CD8-positive, alpha-beta T cell (primary cell): ENCODE measurements at regions of chr11 and their contacts with region 1.

Region 1: DNA sequence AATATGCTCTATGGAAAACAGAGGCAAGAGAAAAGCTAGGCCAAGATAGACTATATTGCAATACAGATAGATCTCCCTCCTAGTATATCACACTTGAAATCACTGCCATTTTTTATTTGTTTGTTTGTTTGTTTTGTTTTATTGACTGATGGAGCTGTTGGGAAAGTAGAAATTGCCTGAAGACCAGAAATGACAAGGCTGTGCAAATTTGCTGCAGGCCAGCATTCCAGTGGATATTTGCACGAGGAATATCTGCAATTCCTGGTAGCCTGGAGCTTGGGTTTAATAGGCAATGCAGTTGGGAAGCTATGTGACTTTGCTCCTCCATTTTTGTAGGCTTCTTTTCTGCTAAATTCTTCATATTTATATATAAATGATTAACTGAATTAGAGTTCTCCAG is 991.7 kb downstream of the LRRC4C start:
- DNase-seq: no peak
- ATAC-seq: no peak
- H3K4me3 ChIP-seq: no peak overlapping the region
- H3K4me3 Mint-ChIP-seq: no peak overlapping the region
- H3K27ac ChIP-seq: no peak overlapping the region
- H3K27ac Mint-ChIP-seq: no peak overlapping the region
- H3K4me1 ChIP-seq: no peaks in the 10 kb centered on the region
- H3K4me1 Mint-ChIP-seq: no peaks in the 10 kb centered on the region
- H3K27me3 ChIP-seq: no peaks in the 10 kb centered on the region
- H3K27me3 Mint-ChIP-seq: no peaks in the 10 kb centered on the region
- CTCF ChIP-seq: no peak

Region 2: DNA sequence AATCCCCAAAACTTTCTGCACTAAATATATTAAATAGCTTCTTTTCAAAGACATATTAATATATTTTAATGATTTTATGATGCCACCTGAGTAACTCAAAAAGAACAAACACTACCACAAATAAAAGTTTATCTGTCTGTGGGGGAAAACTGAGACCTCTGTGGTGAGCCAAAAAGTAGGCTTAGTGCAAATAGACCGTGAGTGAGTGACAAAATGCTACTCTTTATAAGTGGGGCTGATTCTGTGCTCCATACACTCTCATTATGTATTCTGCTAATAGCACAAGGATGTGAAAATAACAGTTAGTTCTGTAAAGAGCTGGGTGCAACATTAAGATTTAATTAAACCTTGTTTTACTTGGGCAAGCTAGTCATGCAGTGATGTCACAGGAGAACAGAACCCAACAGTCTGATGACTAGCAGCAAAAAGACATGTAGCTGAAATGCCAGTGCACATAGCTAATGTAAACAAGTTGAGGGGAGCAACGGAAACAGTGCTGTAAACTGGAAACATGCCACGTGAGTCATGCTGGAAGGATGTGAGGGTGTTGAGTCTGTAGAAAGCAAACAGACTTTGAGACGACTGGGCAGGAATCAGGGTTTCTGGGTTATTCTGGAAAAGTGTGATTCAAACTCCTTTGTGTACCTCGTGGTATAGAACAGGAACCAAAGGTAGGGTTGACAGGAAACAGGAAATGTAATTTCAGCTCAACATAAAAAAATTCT is 138.7 kb before region 1 on chr11:
- CTCF ChIA-PET with region 1: no interaction called
- POLR2A ChIA-PET with region 1: no interaction called
- intact Hi-C with region 1: no loop called
- DNase-seq: no peak
- ATAC-seq: no peak
- H3K4me3 ChIP-seq: no peak overlapping the region
- H3K4me3 Mint-ChIP-seq: no peak overlapping the region
- H3K27ac ChIP-seq: no peak overlapping the region
- H3K27ac Mint-ChIP-seq: no peak overlapping the region
- H3K4me1 ChIP-seq: no peaks in the 10 kb centered on the region
- H3K4me1 Mint-ChIP-seq: no peaks in the 10 kb centered on the region
- H3K27me3 ChIP-seq: no peaks in the 10 kb centered on the region
- H3K27me3 Mint-ChIP-seq: no peaks in the 10 kb centered on the region
- CTCF ChIP-seq: no peak

Region 3: DNA sequence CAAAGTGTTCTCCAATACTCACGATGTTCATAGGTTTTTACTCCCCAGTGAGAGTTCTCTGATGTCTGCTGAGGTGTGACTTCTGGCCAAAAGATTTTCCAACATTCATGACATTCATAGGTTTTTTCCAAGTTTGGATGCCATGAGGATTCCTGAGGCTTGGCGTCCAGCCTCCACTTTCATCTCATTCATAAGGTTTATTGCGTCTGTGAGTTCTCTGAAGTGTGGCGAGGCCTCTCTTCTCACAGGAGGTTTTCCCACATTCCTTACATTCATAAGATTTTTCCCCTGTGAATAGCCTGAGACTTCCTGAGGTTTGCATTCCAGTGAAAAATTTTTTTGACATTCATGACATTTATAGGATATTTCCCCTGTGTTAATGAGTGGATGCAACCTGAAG is 22.4 kb before region 1 on chr11:
- CTCF ChIA-PET with region 1: no interaction called
- POLR2A ChIA-PET with region 1: no interaction called
- intact Hi-C with region 1: no loop called
- DNase-seq: no peak
- ATAC-seq: no peak
- H3K4me3 ChIP-seq: no peak overlapping the region
- H3K4me3 Mint-ChIP-seq: no peak overlapping the region
- H3K27ac ChIP-seq: no peak overlapping the region
- H3K27ac Mint-ChIP-seq: no peak overlapping the region
- H3K4me1 ChIP-seq: no peaks in the 10 kb centered on the region
- H3K4me1 Mint-ChIP-seq: no peaks in the 10 kb centered on the region
- H3K27me3 ChIP-seq: no peaks in the 10 kb centered on the region
- H3K27me3 Mint-ChIP-seq: no peaks in the 10 kb centered on the region
- CTCF ChIP-seq: no peak

Region 4: GRCh38 chr11:40537734-40538133 is 70.0 kb after region 1 on chr11:
- CTCF ChIA-PET with region 1: no interaction called
- POLR2A ChIA-PET with region 1: no interaction called
- intact Hi-C with region 1: no loop called
- DNase-seq: no peak
- ATAC-seq: no peak
- H3K4me3 ChIP-seq: no peak overlapping the region
- H3K4me3 Mint-ChIP-seq: no peak overlapping the region
- H3K27ac ChIP-seq: no peak overlapping the region
- H3K27ac Mint-ChIP-seq: no peak overlapping the region
- H3K4me1 ChIP-seq: no peaks in the 10 kb centered on the region
- H3K4me1 Mint-ChIP-seq: no peaks in the 10 kb centered on the region
- H3K27me3 ChIP-seq: no peaks in the 10 kb centered on the region
- H3K27me3 Mint-ChIP-seq: no peaks in the 10 kb centered on the region
- CTCF ChIP-seq: no peak

Region 5: DNA sequence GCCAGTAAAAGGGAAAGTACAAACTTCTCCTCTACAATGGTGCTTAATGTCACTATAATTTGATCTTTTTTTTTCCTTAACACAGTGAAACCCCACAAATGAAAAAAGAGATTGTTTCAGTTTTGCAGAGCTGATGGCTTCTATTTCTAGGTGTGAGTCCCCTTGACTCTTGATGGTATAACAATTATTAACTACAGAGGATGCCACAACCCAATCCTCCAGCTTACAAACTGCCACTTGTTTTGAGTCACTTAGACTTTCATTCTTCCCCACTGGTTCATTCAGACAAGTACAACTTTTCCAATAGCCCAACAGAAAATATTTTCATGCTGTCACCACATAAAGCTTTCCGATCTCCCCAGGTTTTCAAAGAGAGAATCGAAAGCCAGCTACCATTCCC is 179.5 kb after region 1 on chr11:
- CTCF ChIA-PET with region 1: no interaction called
- POLR2A ChIA-PET with region 1: no interaction called
- intact Hi-C with region 1: loop called in 1 of 2 experiments (anchors 10 kb)
- DNase-seq: no peak
- ATAC-seq: no peak
- H3K4me3 ChIP-seq: no peak overlapping the region
- H3K4me3 Mint-ChIP-seq: no peak overlapping the region
- H3K27ac ChIP-seq: no peak overlapping the region
- H3K27ac Mint-ChIP-seq: no peak overlapping the region
- H3K4me1 ChIP-seq: no peaks in the 10 kb centered on the region
- H3K4me1 Mint-ChIP-seq: no peaks in the 10 kb centered on the region
- H3K27me3 ChIP-seq: no peaks in the 10 kb centered on the region
- H3K27me3 Mint-ChIP-seq: no peaks in the 10 kb centered on the region
- CTCF ChIP-seq: no peak